ENCODE measurements at regions of chr21 and their contacts with region 1.

Region 1: DNA sequence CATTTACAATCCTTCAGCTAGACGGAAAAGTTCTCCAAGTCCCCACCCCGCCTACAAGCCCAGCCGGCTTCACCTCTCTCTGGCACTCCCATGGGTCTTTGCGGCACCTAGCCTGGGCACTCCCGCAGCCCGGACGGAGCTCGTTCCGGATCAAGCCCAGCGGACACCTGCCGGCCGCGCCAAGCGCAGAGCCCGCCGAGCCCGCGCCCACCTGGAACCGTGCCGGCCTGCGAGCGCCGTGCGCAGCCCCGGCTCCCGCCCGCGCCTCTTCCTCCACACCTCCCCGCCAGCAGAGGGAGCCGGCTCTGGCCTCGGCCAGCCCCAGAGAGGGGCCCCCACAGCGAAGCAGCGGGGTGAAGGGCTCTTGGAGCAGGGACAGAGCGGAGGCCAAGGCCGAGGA is 50.0 kb upstream of the KRTAP19-8 start:
- DNase-seq: peak; percentile 14
- ATAC-seq: no peak
- H3K4me3 Mint-ChIP-seq: no peak overlapping the region
- H3K27ac Mint-ChIP-seq: no peak overlapping the region
- H3K4me1 Mint-ChIP-seq: peaks cover 11% of the 10 kb centered on the region
- H3K27me3 Mint-ChIP-seq: peaks cover 9% of the 10 kb centered on the region

Region 2: DNA sequence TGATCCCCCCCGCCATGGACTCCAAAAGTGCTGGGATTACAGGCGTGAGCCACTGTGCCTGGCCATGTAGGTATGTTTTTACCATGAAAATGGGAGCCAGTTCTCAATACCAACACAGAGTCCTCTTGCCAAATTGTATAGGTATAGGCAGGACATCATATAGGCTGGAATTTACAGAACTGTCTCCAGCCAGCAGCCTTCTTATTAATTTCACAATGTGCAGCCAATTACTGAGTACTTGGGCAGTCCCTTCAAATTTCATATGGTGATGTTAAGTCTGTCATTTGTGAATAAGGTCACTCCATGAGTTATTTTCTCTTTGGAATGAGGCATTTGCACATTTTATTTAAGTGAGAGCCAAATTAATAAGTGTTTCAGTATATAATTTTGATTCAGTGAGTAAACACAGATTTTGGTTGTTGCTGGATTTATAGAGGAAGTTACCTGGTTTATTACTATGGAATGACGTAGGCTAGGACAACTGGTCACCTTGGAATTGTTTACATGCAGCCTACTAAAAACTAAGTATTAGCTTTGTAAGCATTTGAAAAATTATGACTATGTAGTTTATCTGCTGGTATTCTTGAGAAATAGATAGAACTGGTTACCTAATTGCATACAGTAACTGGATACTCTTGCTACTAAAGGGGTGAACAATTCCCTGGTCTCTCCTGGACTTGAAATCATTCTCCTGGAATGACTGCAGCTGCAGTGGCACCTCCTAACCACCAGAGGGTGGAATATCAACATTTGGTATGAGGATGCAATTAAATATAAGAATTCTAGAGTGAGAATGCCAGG is 747.7 kb before region 1 on chr21:
- CTCF ChIA-PET with region 1: interaction called, 4 read pairs
- POLR2A ChIA-PET with region 1: no interaction called
- intact Hi-C with region 1: loop called (anchors 1 to 2 kb)
- DNase-seq: peak; percentile 46
- ATAC-seq: no peak
- H3K4me3 Mint-ChIP-seq: no peak overlapping the region
- H3K27ac Mint-ChIP-seq: no peak overlapping the region
- H3K4me1 Mint-ChIP-seq: no peaks in the 10 kb centered on the region
- H3K27me3 Mint-ChIP-seq: peaks cover 7% of the 10 kb centered on the region

Region 3: GRCh38 chr21:30718239-30718909 is 369.9 kb before region 1 on chr21 and contains the start of gene KRTAP21-3:
- CTCF ChIA-PET with region 1: no interaction called
- POLR2A ChIA-PET with region 1: no interaction called
- intact Hi-C with region 1: loop called in 1 of 2 experiments (anchors 10 kb)
- DNase-seq: peak; percentile 22
- ATAC-seq: peak; percentile 92
- H3K4me3 Mint-ChIP-seq: no peak within 1 kb of the TSS
- H3K27ac Mint-ChIP-seq: peak within 1 kb of the TSS; percentile 75
- H3K4me1 Mint-ChIP-seq: peaks cover 22% of the 10 kb centered on the region
- H3K27me3 Mint-ChIP-seq: peaks cover 4% of the 10 kb centered on the region
- total RNA-seq, gene KRTAP21-3: not detected

Region 4: GRCh38 chr21:30839304-30839703 is 249.0 kb before region 1 on chr21:
- CTCF ChIA-PET with region 1: interaction called, 12 read pairs
- POLR2A ChIA-PET with region 1: no interaction called
- intact Hi-C with region 1: loop called in 1 of 2 experiments (anchors 2 kb)
- DNase-seq: peak; percentile 72
- ATAC-seq: peak; percentile 92
- H3K4me3 Mint-ChIP-seq: no peak overlapping the region
- H3K27ac Mint-ChIP-seq: no peak overlapping the region
- H3K4me1 Mint-ChIP-seq: no peaks in the 10 kb centered on the region
- H3K27me3 Mint-ChIP-seq: peaks cover 12% of the 10 kb centered on the region

Measured in activated CD4-positive, alpha-beta T cell treated with anti-CD3 and anti-CD28 coated beads for 36 hours (primary cell).